ENCODE measurements at regions of chr3 and their contacts with region 1.

Region 1: GRCh38 chr3:30835667-30836066 is 58.8 kb downstream of the GADL1 start:
- DNase-seq: no peak
- H3K4me3 ChIP-seq: no peak overlapping the region
- H3K27ac ChIP-seq: no peak overlapping the region
- H3K4me1 ChIP-seq: no peaks in the 10 kb centered on the region
- H3K27me3 ChIP-seq: no peaks in the 10 kb centered on the region
- CTCF ChIP-seq: no peak
- POLR2A ChIP-seq: no peak

Region 2: DNA sequence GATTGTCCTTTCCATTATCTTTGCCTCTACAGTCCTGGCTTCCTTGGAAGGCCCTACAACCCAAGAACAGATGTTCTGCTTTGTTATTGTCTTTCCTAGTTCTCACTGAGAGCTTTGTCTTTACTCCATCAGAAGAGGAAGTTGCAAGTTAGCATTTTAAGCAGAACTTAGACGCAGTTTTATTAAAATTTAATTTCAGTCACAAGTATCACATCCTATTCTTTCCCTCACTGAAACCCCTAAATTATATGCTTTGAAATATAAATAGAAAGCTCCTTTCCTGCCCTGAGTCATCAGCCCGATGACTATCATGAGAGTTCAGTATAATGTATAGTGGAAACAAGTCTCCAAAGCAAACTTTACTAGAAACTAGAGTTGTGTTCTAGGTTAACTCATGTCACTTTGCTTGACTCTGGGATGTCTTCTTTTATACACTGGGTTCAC is 1846.0 kb before region 1 on chr3:
- intact Hi-C with region 1: no loop called
- DNase-seq: no peak
- H3K4me3 ChIP-seq: no peak overlapping the region
- H3K27ac ChIP-seq: no peak overlapping the region
- H3K4me1 ChIP-seq: no peaks in the 10 kb centered on the region
- H3K27me3 ChIP-seq: no peaks in the 10 kb centered on the region
- CTCF ChIP-seq: no peak
- POLR2A ChIP-seq: no peak

Region 3: DNA sequence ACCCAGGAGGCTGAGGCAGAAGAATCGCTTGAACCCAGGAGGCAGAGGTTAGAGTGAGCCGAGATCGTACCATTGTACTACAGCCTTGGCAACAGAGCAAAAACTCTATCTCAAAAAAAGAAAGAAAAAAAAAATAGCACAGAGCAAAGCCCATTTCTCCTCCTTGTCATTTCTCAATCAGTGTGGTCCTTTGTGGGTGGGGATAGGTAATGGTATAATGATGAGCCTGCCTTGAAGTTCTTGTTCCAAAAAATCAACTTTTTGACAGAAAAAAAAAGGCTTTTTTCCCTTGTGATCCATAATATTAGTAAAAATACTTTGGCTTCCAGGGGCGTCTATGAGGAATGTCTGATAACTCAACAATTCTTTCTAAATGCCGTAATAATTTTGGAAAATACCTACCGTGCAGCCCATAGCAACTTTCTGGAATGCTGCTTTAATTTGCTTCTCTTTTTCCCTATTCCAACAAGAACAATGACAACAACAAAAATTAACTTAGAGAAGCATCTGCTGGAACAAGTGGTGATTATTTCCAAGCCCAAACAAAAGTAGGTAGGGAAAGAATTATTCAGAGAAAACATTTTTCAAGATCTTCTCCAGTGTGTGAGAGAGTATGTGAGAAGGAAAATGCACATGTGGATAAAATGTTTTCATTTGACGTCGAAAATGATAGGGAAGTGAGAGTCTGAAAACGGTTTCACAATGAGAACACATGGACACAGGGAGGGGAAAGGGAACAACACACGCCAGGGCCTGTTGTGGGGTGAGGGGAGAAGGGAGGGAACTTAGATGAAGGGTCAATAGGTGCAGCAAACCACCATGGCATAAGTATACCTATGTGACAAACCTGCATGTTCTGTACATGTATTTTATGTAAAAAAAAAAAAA is 1217.0 kb before region 1 on chr3:
- intact Hi-C with region 1: no loop called
- DNase-seq: no peak
- H3K4me3 ChIP-seq: no peak overlapping the region
- H3K27ac ChIP-seq: peak overlapping the region; percentile 8 to 33
- H3K4me1 ChIP-seq: no peaks in the 10 kb centered on the region
- H3K27me3 ChIP-seq: no peaks in the 10 kb centered on the region
- CTCF ChIP-seq: no peak
- POLR2A ChIP-seq: no peak

Region 4: GRCh38 chr3:30795176-30795575 is 40.5 kb before region 1 on chr3:
- intact Hi-C with region 1: no loop called
- DNase-seq: no peak
- H3K4me3 ChIP-seq: no peak overlapping the region
- H3K27ac ChIP-seq: no peak overlapping the region
- H3K4me1 ChIP-seq: no peaks in the 10 kb centered on the region
- H3K27me3 ChIP-seq: no peaks in the 10 kb centered on the region
- CTCF ChIP-seq: no peak
- POLR2A ChIP-seq: no peak

Region 5: GRCh38 chr3:31450345-31450744 is 614.7 kb after region 1 on chr3:
- intact Hi-C with region 1: loop called (anchors 5 kb)
- DNase-seq: no peak
- H3K4me3 ChIP-seq: no peak overlapping the region
- H3K27ac ChIP-seq: no peak overlapping the region
- H3K4me1 ChIP-seq: no peaks in the 10 kb centered on the region
- H3K27me3 ChIP-seq: no peaks in the 10 kb centered on the region
- CTCF ChIP-seq: no peak
- POLR2A ChIP-seq: no peak

Region 6: GRCh38 chr3:31862666-31863279 is 1027.1 kb after region 1 on chr3:
- intact Hi-C with region 1: no loop called
- DNase-seq: no peak
- H3K4me3 ChIP-seq: no peak overlapping the region
- H3K27ac ChIP-seq: no peak overlapping the region
- H3K4me1 ChIP-seq: no peaks in the 10 kb centered on the region
- H3K27me3 ChIP-seq: no peaks in the 10 kb centered on the region
- CTCF ChIP-seq: no peak
- POLR2A ChIP-seq: no peak

Measured in breast epithelium (tissue), 4 donors.